ENCODE measurements at regions of chrX and their contacts with region 1.

Region 1: GRCh38 chrX:153897899-153898298 is 6.6 kb upstream of the AVPR2 start:
- DNase-seq: no peak
- H3K4me3 ChIP-seq: no peak overlapping the region
- H3K27ac ChIP-seq: no peak overlapping the region
- H3K4me1 ChIP-seq: peaks cover 6 to 30% (median 27%) of the 10 kb centered on the region in 6 donors
- H3K27me3 ChIP-seq: peaks cover 0 to 3% (median 0%) of the 10 kb centered on the region in 7 donors
- CTCF ChIP-seq: no peak
- POLR2A ChIP-seq: no peak

Region 2: GRCh38 chrX:153828723-153829548 is 69.0 kb before region 1 on chrX:
- intact Hi-C with region 1: loop called (anchors 10 kb)
- DNase-seq: peak; percentile 64
- H3K4me3 ChIP-seq: peak overlapping the region; percentile 10 to 68 (median 41)
- H3K27ac ChIP-seq: peak overlapping the region in 6 of 8 donors; percentile 14 to 59 (median 46)
- H3K4me1 ChIP-seq: peaks cover 0 to 26% (median 11%) of the 10 kb centered on the region in 6 donors
- H3K27me3 ChIP-seq: peaks cover 6 to 76% (median 31%) of the 10 kb centered on the region in 7 donors
- CTCF ChIP-seq: no peak
- POLR2A ChIP-seq: no peak